Aorta (tissue), 5 donors: ENCODE measurements at regions of chrX and their contacts with region 1.

Region 1: DNA sequence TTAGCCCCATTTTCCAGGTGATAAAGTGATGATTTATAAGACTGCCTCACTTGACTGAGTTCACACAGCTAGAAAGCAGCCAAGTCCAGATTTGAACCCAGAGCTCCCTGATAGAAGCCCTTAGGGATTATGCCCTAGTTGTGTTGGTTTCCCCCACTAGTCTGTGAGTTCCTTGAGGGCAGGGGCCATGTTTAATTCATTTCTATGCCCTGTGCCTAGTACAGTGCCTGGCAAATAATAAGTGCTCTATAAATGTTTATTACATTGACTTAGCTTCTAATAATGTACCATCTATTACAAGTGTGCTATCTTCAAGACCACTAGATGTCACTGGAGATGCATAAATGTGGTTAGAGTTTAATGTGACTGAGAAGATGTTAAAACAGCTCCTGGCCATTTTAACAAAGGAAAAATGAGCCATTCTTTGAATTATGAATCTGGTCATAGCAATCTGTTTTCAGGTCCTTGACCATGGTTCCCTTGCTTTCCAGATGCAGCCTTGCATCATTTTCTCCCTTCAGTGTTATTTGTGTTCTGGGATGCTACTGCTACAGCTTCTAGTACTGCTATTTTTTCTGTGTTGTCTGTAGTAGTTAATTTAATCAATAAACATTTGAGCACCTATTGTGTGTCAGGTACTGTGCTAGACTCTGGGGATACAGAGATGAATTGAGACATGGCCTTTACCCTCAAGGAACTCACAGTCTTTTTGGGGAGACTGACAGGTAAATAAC is 43.2 kb downstream of the SLC9A6 start:
- DNase-seq: no peak
- ATAC-seq: peak; percentile 75
- H3K4me3 ChIP-seq: no peak overlapping the region
- H3K27ac ChIP-seq: peak overlapping the region in 1 of 2 donors; percentile 97
- H3K4me1 ChIP-seq: no peaks in the 10 kb centered on the region
- H3K27me3 ChIP-seq: no peaks in the 10 kb centered on the region

Region 2: DNA sequence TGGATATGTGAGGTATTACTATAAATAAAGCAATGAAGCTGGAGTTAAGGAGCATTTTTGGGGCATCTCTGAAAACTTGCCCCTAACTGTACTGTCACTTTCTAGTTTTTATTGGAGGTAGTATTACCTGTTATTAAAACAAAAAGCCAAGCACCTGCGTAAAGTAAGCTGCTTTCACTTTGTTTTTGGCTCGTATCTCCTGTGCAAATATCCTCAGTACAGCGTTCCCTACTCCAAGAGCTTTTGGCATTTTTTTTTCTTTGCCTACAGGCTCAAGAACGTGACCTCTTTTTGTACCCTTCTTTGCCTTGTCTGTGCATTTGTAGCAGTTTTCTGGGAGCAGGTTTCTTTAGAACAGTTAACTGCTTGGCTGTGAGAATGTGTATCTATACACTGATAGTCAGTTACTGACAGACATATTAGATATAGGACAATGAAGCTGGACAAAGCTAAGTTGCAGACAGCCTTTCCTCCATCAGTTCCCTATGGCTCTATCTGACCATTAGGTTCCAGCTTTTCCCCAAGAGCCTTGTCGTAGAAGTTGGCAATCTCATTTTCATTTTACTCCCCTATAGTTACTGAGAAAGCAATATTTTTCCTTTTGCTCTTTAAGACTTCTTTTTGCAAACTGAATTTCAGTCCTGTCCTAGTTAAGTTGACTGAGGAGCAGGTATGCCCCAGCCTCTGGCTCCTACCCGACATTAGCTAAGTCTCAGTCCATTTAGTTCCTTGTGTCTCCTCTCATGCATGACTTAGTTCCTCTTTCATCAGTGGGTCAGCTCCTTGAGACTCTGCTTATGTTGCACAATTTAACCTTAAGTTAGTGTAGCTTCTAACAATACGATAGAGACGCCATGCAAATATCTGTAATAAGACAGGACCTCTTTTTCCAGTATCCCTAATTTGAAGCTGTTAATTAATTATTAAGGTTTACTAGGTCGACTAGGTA is 1640.0 kb before region 1 on chrX:
- intact Hi-C with region 1: no loop called
- DNase-seq: no peak
- ATAC-seq: no peak
- H3K4me3 ChIP-seq: no peak overlapping the region
- H3K27ac ChIP-seq: no peak overlapping the region
- H3K4me1 ChIP-seq: no peaks in the 10 kb centered on the region
- H3K27me3 ChIP-seq: no peaks in the 10 kb centered on the region

Region 3: DNA sequence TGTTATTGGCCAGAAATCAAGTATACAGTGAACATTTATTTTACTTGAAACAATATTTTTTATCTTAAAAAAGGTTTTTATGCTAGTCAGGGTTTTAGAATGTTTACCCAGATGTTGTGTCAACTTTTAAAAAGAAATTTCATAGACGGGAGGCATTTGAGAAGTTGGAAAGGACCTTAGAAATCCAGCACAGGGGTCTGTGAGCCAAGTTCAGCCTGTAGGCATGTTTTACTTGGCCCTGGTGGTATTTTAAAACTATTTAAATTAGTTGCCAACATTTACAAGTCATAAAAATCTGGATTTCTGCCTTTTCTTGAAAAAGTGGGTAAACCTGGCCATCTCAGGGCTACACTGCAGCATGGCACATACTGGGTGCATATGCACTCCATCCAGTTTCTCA is 93.4 kb after region 1 on chrX:
- intact Hi-C with region 1: loop called in 1 of 2 experiments (anchors 5 kb)
- DNase-seq: no peak
- ATAC-seq: peak; percentile 63
- H3K4me3 ChIP-seq: no peak overlapping the region
- H3K27ac ChIP-seq: peak overlapping the region in 1 of 2 donors; percentile 32
- H3K4me1 ChIP-seq: no peaks in the 10 kb centered on the region
- H3K27me3 ChIP-seq: no peaks in the 10 kb centered on the region

Region 4: DNA sequence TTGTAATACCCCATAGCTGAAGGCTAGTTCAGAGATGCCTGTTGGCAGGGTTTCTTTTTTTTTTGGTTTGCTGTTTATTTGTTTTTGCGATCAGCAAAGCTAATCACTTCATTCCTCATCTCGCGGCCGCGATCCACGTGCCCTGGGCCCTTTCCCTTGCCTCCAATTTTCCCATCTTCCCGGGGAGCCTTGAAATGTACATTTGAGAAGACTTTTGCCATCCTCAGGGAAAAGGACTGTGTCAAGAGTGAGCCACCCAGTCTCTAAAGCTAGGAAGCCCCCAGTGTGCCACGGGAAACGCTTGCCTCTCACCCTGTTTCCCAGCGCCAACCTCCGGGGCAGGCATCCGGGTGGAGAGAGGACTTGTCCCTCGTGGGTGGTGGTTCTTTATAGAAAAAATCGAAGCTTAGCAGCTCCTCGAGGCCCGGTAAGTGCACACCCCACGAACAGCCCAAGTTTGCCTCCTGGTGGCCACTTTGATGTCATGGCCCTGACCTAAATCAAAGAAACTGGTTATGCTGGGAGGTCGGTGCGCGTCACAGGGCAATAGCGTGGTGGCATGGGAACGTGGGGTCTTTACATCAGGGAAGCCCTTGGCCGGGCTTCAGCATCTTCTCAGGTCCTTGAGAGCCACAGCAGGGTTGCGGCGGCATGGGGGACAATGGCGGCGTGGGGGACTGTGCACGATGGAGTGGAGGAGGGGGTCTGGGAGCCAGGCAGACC is 180.8 kb after region 1 on chrX:
- intact Hi-C with region 1: loop called (anchors 2 to 5 kb)
- DNase-seq: peak; percentile 71 to 81
- ATAC-seq: peak; percentile 57
- H3K4me3 ChIP-seq: no peak overlapping the region
- H3K27ac ChIP-seq: peak overlapping the region in 1 of 2 donors; percentile 68
- H3K4me1 ChIP-seq: no peaks in the 10 kb centered on the region
- H3K27me3 ChIP-seq: no peaks in the 10 kb centered on the region

Region 5: GRCh38 chrX:136259543-136259942 is 231.1 kb after region 1 on chrX:
- intact Hi-C with region 1: loop called in 1 of 2 experiments (anchors 5 kb)
- DNase-seq: no peak
- ATAC-seq: peak; percentile 45
- H3K4me3 ChIP-seq: no peak overlapping the region
- H3K27ac ChIP-seq: peak overlapping the region in 1 of 2 donors; percentile 96
- H3K4me1 ChIP-seq: no peaks in the 10 kb centered on the region
- H3K27me3 ChIP-seq: no peaks in the 10 kb centered on the region

Region 6: GRCh38 chrX:136577552-136577951 is 549.1 kb after region 1 on chrX:
- intact Hi-C with region 1: loop called (anchors 5 kb)
- DNase-seq: peak; percentile 58 to 78
- ATAC-seq: peak; percentile 85
- H3K4me3 ChIP-seq: no peak overlapping the region
- H3K27ac ChIP-seq: no peak overlapping the region
- H3K4me1 ChIP-seq: no peaks in the 10 kb centered on the region
- H3K27me3 ChIP-seq: no peaks in the 10 kb centered on the region